ENCODE measurements at regions of chr3 and their contacts with region 1.

Region 1: DNA sequence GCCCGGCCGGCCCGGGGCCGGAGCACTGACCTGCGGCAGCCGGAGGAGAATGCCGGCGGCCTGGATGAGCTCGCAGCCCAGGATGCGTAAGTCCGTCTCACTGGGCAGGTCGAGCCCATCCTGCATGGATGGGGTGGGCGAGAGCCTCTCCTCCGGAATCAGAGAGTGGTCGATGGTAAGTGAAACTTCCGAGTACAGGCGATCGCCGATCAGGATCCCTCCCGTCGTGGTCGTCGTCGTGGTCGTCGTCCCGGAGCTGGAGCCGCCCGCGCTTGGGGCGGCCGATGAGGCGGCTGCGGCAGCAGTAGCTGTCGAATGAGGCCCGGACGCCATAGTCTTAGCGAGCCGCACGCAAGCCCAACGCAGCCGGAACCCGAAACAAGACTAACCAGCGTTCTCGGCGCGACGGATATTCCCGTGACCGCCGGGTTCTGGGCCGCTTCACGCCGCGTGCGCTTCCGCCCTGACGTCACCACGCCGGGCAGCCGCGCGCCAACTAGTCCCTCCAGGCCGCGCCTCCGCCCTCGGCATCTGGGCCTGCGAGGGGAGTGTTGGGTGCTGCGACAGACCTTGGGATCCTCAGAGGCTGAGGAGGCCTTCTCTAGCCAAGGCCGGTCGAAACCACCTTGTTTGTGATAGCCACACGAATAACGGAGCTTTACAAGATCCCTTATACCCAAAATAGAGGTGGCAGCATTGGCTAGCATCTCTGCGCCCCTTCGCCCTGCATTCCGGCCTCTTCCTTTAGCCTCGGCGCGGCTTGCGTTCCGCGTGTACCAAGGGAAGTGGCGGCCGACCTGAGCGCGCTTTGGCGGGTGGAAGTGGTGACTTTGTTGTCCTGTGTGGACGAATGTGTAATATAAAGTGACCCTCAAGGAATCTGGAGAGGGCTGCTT is at the start of gene CCNL1:
- DNase-seq: peak; percentile 98
- ATAC-seq: peak; percentile 85
- H3K4me3 ChIP-seq: peak within 1 kb of the TSS; percentile 92
- H3K27ac ChIP-seq: peak within 1 kb of the TSS; percentile 98
- H3K4me1 ChIP-seq: peaks cover 44% of the 10 kb centered on the region
- H3K27me3 ChIP-seq: no peaks in the 10 kb centered on the region
- CTCF ChIP-seq: no peak
- total RNA-seq, gene CCNL1: 172 and 231 TPM in 2 replicates

Region 2: GRCh38 chr3:156964577-156964976 is 195.4 kb before region 1 on chr3:
- CTCF ChIA-PET with region 1: no interaction called
- POLR2A ChIA-PET with region 1: no interaction called
- intact Hi-C with region 1: no loop called
- DNase-seq: no peak
- ATAC-seq: no peak
- H3K4me3 ChIP-seq: no peak overlapping the region
- H3K27ac ChIP-seq: no peak overlapping the region
- H3K4me1 ChIP-seq: no peaks in the 10 kb centered on the region
- H3K27me3 ChIP-seq: no peaks in the 10 kb centered on the region
- CTCF ChIP-seq: no peak

Region 3: GRCh38 chr3:157174649-157175498 is 14.9 kb after region 1 on chr3:
- CTCF ChIA-PET with region 1: no interaction called
- POLR2A ChIA-PET with region 1: interaction called, 37 read pairs
- intact Hi-C with region 1: loop called (anchors 1 kb)
- DNase-seq: peak; percentile 99
- ATAC-seq: peak; percentile 91
- H3K4me3 ChIP-seq: peak overlapping the region; percentile 90
- H3K27ac ChIP-seq: peak overlapping the region; percentile 84
- H3K4me1 ChIP-seq: peaks cover 15% of the 10 kb centered on the region
- H3K27me3 ChIP-seq: no peaks in the 10 kb centered on the region
- CTCF ChIP-seq: no peak